ENCODE measurements at regions of chr2 and their contacts with region 1.

Region 1: DNA sequence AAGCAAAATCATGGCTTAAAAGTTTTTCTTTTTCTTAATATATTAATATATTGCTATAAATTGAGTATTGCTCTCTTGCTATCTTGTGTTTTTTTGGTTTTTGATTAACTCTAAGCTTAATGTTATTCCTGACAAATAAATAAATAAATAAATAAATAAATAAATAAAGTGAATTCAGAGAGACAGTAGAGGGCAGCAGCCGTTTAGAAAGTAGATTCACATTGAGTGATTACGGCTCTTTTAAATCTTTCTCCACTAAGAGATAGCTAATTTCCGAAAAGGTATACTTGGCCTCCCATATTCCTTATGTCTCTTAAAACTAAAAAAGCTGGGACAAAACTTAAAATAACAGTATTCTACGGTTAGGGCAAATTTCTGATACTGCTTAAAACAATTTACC is 34.3 kb downstream of the MSH2 start:
- DNase-seq: no peak
- H3K4me3 ChIP-seq: no peak overlapping the region
- H3K27ac ChIP-seq: no peak overlapping the region
- H3K4me1 ChIP-seq: peaks cover 3% of the 10 kb centered on the region
- H3K27me3 ChIP-seq: no peaks in the 10 kb centered on the region
- CTCF ChIP-seq: peak in 2 of 3 experiments; percentile 7 to 51
- POLR2A ChIP-seq: no peak

Region 2: GRCh38 chr2:46923041-46923528 is 514.2 kb before region 1 on chr2:
- intact Hi-C with region 1: no loop called
- DNase-seq: no peak
- H3K4me3 ChIP-seq: no peak overlapping the region
- H3K27ac ChIP-seq: no peak overlapping the region
- H3K4me1 ChIP-seq: no peaks in the 10 kb centered on the region
- H3K27me3 ChIP-seq: no peaks in the 10 kb centered on the region
- CTCF ChIP-seq: no peak
- POLR2A ChIP-seq: no peak

Region 3: GRCh38 chr2:47323009-47323821 is 114.1 kb before region 1 on chr2:
- intact Hi-C with region 1: no loop called
- DNase-seq: peak; percentile 81
- H3K4me3 ChIP-seq: no peak overlapping the region
- H3K27ac ChIP-seq: no peak overlapping the region
- H3K4me1 ChIP-seq: no peaks in the 10 kb centered on the region
- H3K27me3 ChIP-seq: no peaks in the 10 kb centered on the region
- CTCF ChIP-seq: peak; percentile 80 to 97 (median 94)
- POLR2A ChIP-seq: no peak

Region 4: DNA sequence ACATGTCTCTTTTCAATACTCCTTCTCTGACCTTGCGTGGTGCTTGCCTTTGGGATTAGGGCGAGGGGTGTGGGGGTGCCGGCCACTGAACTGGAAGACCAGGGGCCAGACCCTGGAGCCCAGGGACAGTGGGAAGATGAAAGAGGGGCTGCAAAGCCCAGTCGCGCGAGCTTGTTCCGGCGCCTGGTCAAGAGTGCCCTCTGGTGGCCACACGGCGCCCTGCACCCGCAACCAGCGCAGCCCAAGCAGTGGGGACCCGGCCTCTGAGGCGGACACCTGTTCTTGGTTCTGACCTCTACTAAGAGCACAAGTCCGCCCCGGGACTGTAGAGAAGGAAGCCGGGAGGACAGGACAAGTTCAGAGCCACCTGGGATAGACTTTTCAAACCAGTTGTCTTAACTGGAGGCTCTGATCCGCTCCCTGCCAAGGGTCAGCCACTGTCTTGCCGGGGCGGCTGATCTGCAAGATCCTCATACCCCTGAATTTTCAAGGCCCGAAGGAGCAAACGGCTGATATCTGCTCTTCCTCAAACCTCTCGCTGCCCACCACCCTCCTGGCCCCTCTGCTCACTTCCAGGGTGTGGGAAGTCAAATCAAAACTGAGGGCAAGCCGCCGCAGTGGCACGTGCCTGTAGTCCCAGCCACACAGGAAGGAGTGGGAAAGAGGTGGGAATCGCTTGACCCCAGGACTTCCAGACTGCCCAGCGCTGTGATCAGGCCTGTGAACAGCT is 330.8 kb after region 1 on chr2:
- intact Hi-C with region 1: loop called (anchors 10 kb)
- DNase-seq: peak; percentile 83
- H3K4me3 ChIP-seq: no peak overlapping the region
- H3K27ac ChIP-seq: no peak overlapping the region
- H3K4me1 ChIP-seq: peaks cover 5% of the 10 kb centered on the region
- H3K27me3 ChIP-seq: no peaks in the 10 kb centered on the region
- CTCF ChIP-seq: peak; percentile 94 to 99 (median 95)
- POLR2A ChIP-seq: no peak